ENCODE measurements at regions of chr12 and their contacts with region 1.

Region 1: DNA sequence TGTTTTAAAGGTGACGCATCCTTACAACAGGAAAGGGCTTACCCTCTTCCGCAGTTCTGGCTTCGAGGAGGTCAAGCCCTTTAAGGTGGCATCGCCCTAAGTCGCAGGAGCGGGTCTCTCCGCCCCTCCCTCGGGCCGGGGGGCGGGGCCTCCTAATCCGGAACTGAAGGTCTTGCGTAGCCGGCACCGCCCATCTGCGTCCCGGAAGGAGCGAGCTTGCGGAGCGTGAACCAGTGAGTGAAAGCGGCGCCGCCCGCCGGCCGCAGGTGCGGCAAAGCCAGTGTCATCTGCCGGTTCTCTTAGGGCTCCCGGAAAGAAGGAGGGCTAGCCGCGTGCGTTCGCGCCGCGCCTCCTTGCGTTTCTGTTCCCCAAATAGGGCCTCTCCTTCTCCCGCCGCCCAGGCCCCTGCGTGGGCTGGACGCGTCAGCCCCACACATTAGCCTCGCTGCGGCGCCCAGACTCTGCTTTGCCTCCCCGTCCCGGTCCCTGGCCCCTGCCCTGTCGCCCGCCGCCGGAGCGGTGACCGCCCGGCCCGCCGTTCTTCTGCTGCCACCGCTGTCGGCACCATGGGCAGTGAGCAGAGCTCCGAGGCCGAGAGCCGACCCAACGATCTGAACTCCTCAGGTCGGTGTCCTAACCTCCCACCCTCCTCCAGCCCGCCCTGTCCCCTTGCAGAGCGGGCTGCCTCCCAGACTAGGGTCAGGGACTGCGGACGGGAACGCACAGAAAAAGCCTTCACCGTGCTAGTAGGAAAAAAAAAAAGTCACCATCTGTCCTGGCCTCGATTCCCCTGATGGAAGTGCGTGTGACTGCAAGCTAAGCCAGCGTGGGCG is at the start of gene BORCS5:
- DNase-seq: peak; percentile 92 to 99
- H3K4me3 ChIP-seq: peak within 1 kb of the TSS; percentile 74 to 82
- H3K27ac ChIP-seq: peak within 1 kb of the TSS; percentile 91 to 98
- H3K4me1 ChIP-seq: peaks cover 0 to 14% of the 10 kb centered on the region in 2 donors
- H3K27me3 ChIP-seq: no peaks in the 10 kb centered on the region
- CTCF ChIP-seq: peak in 2 of 3 experiments; percentile 21 to 24
- total RNA-seq, gene BORCS5: 3.0 TPM

Region 2: GRCh38 chr12:11209108-11209507 is 1148.0 kb before region 1 on chr12:
- intact Hi-C with region 1: no loop called
- DNase-seq: no peak
- H3K4me3 ChIP-seq: no peak overlapping the region
- H3K27ac ChIP-seq: no peak overlapping the region
- H3K4me1 ChIP-seq: no peaks in the 10 kb centered on the region
- H3K27me3 ChIP-seq: no peaks in the 10 kb centered on the region
- CTCF ChIP-seq: no peak

Region 3: DNA sequence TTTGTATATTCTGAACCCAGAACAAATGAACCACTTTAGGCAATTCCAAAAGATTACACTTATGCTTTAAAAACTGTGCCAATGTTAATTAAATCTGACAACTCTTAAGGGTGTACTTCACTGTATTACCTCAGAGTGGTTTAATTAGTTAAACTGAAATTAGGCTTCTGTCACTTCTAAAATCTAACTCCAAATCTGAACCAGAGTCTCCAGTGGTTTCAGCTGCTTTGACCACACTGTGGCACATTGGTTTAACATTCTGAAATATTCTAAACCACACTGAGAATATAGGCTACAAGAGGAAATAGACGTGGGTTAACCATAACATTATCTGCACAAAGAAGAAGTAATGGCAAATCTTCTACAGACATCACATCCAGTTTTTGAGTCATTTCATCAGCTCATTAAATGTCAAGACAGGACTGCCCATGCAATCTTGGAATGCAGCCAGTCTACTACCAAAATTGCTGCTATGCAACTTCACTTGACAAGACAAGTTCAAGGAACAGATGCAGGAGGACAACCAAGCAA is 185.0 kb before region 1 on chr12:
- intact Hi-C with region 1: no loop called
- DNase-seq: no peak
- H3K4me3 ChIP-seq: no peak overlapping the region
- H3K27ac ChIP-seq: peak overlapping the region in 1 of 2 donors; percentile 2
- H3K4me1 ChIP-seq: peaks cover 0 to 4% of the 10 kb centered on the region in 2 donors
- H3K27me3 ChIP-seq: no peaks in the 10 kb centered on the region
- CTCF ChIP-seq: no peak

Region 4: DNA sequence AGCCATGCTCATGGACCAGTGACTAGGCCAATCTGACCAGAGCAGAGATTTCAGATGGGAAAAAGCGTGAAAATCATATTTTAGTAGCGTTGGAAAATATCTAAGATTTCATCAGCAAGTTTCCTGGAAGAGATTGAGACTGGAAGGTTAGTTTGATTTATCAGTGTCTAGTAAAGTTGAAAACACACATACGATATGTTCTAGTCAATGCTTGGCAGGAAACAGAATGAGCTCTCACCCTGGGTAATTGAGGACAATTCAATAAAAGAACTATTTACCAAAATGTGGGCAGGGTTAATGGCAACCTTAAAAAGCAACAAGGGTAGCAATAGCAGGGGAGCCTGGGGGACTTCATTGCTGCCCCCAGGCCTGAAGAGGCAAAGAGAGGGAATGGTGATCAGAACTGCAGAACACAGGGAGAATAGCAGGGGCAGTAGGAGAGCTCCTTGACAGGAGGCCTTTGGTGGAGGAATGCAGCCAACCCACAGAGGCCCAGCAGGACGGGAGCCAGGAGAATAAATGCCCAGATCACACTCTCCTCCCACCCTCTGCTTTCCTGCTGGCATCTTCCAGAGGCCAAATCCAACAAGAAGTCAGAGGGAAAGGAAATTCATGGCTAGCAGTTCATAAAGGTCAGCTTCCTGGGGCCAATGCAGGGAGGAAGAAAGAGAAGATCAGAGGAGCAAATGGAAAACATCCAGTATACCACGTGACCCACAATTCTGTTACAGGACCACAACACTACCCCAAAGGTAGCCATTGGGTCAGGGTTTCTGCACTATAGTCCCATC is 62.7 kb before region 1 on chr12:
- intact Hi-C with region 1: no loop called
- DNase-seq: no peak
- H3K4me3 ChIP-seq: no peak overlapping the region
- H3K27ac ChIP-seq: no peak overlapping the region
- H3K4me1 ChIP-seq: peaks cover 0 to 3% of the 10 kb centered on the region in 2 donors
- H3K27me3 ChIP-seq: no peaks in the 10 kb centered on the region
- CTCF ChIP-seq: no peak

Region 5: GRCh38 chr12:12334367-12335040 is 22.6 kb before region 1 on chr12:
- intact Hi-C with region 1: loop called (anchors 2 kb)
- DNase-seq: peak in 1 of 2 donors; percentile 56
- H3K4me3 ChIP-seq: no peak overlapping the region
- H3K27ac ChIP-seq: peak overlapping the region; percentile 24 to 51
- H3K4me1 ChIP-seq: peaks cover 9 to 33% of the 10 kb centered on the region in 2 donors
- H3K27me3 ChIP-seq: no peaks in the 10 kb centered on the region
- CTCF ChIP-seq: peak; percentile 47 to 67 (median 60)

Measured in ascending aorta (tissue), 2 donors.